ENCODE measurements at regions of chr3 and their contacts with region 1.

Region 1: DNA sequence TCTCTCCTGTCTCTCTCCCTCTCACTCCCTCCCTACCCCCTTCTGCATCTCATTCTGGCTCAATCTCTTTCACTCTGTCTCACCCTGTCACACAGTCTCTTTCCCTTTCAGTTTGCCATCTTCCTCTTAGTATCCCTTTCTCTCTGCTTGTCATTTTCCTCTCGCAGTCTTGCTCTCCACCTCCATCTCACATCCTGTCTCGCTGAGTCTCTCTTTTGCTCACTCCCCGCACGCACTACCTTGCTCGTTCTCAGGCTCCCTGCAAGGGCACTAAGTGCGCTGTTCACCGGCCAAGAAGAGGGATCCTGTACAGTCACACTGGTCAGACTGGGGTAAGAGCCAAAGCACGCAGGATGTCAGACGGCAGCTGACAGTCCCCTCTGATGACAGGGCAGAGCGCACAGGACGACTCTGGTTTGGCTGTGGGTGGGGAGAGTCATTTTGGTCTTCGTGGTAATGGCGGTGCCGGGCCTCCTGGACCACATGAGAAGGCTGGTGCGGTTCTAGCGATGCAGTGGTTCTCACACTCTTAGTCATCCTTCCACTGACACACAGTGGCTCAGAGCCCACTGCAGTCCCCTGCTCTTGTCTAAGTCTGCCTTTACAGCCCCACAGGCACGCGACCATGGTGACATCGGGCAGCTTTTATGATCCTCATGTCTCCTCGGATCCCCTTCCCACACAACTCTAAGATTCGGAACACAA is 356.8 kb downstream of the FOXP1 start:
- DNase-seq: peak; percentile 94
- H3K4me3 Mint-ChIP-seq: peak overlapping the region; percentile 85
- H3K27ac Mint-ChIP-seq: peak overlapping the region; percentile 95
- H3K4me1 Mint-ChIP-seq: peaks cover 41% of the 10 kb centered on the region
- H3K27me3 Mint-ChIP-seq: peaks cover 35% of the 10 kb centered on the region

Region 2: DNA sequence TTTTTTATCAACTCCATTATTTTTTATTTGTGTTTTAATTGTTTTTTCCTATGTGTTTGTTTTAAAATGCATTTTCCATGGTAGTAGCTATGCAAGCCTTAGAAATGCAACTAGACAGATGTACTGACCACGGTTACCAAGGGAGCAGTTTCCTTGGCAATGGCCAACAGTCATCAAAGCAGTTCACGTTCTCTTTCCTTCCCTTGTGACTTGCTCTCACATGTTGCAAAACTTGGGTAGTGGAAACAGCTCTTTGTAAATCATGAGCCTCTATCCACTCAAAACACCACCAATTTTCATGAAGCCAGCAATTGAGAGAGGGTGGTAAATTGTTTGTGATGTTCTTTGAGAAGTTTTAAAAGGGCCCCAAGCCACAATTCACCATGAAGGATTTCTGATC is 414.8 kb before region 1 on chr3:
- intact Hi-C with region 1: no loop called
- DNase-seq: no peak
- H3K4me3 Mint-ChIP-seq: no peak overlapping the region
- H3K27ac Mint-ChIP-seq: no peak overlapping the region
- H3K4me1 Mint-ChIP-seq: no peaks in the 10 kb centered on the region
- H3K27me3 Mint-ChIP-seq: peaks cover 6% of the 10 kb centered on the region

Region 3: DNA sequence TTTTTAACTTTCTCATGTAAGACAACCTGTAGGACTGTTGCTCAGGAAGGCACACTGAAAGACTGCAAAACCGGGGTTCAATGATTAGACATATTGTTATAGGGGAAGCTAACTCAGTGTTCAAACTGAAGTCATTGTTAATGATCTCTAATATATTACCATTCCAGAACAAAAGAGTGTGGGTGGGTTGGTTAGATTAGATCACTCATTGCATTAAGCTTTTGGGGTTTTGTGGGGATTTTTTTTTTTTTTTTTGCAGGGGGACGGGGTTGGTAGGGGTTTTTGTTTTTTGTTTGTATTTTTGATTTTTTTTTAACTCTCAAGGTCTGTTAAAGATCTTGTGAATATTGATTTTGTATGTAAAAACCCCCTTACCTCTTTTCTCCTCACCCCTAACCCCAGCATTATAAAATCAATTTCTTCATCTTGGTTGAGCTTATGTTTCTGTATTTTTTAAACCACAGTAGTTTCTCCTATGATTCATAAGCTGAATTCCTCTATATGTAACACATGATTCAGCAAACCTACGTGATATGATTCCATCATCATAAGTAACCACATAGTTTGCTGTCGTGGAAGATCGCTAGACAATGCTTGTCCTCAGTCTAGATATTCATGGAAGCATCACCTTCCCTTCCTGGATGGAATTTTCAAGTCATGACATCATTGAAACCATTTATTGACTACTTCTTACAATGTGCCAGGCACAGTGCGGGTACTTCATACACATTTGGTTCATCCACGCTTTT is 370.1 kb before region 1 on chr3:
- intact Hi-C with region 1: loop called (anchors 5 kb)
- DNase-seq: no peak
- H3K4me3 Mint-ChIP-seq: no peak overlapping the region
- H3K27ac Mint-ChIP-seq: peak overlapping the region; percentile 54
- H3K4me1 Mint-ChIP-seq: peaks cover 12% of the 10 kb centered on the region
- H3K27me3 Mint-ChIP-seq: peaks cover 19% of the 10 kb centered on the region

Region 4: DNA sequence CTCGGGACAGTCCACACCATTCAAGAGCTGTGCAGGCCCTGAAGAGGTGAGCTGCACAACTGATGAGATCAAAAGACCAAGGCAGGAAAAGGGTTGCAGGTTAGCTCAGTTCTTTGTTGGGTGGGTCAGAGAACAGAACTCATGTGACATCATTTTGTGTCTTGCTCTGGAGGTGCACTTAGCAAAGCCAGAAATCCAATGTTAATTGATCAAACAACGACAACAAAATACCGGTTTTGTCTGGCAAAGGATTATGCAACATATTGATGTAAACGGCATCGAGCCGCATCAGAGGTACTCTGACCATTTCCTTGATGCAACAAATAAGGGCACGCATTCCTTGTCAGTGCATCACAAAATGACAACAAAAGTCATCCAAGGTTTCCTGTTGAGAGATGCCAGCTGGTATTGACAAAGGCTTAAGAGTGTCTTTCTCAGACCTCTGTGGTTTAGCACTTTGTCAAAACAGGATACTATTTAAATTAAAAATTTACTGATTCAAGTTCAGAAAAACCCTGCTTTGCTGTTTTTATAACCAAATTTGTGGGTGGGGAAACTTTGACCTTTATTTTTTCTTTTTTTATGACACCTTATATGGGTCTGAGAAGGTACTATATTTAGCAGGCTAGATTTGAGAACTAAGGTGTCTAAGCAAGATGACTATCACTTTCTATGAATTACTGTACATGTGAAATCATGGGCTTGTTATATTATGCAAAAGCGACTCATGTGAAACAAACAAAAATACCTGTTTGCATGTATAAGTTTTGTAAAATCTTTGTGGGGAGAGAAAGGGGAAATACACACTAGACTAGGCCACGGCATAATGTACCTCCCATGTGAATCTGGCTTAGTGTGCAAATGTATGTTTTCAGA is 139.3 kb before region 1 on chr3:
- intact Hi-C with region 1: loop called (anchors 1 kb)
- DNase-seq: peak; percentile 83
- H3K4me3 Mint-ChIP-seq: peak overlapping the region; percentile 62
- H3K27ac Mint-ChIP-seq: peak overlapping the region; percentile 91
- H3K4me1 Mint-ChIP-seq: peaks cover 70% of the 10 kb centered on the region
- H3K27me3 Mint-ChIP-seq: no peaks in the 10 kb centered on the region

Region 5: GRCh38 chr3:71210257-71211007 is 16.3 kb before region 1 on chr3:
- intact Hi-C with region 1: no loop called
- DNase-seq: no peak
- H3K4me3 Mint-ChIP-seq: no peak overlapping the region
- H3K27ac Mint-ChIP-seq: no peak overlapping the region
- H3K4me1 Mint-ChIP-seq: peaks cover 7% of the 10 kb centered on the region
- H3K27me3 Mint-ChIP-seq: peaks cover under 1% of the 10 kb centered on the region

Region 6: GRCh38 chr3:71360764-71361163 is 134.0 kb after region 1 on chr3:
- intact Hi-C with region 1: loop called (anchors 1 kb)
- DNase-seq: no peak
- H3K4me3 Mint-ChIP-seq: peak overlapping the region; percentile 23
- H3K27ac Mint-ChIP-seq: peak overlapping the region; percentile 89
- H3K4me1 Mint-ChIP-seq: peaks cover 25% of the 10 kb centered on the region
- H3K27me3 Mint-ChIP-seq: peaks cover 19% of the 10 kb centered on the region

Region 7: DNA sequence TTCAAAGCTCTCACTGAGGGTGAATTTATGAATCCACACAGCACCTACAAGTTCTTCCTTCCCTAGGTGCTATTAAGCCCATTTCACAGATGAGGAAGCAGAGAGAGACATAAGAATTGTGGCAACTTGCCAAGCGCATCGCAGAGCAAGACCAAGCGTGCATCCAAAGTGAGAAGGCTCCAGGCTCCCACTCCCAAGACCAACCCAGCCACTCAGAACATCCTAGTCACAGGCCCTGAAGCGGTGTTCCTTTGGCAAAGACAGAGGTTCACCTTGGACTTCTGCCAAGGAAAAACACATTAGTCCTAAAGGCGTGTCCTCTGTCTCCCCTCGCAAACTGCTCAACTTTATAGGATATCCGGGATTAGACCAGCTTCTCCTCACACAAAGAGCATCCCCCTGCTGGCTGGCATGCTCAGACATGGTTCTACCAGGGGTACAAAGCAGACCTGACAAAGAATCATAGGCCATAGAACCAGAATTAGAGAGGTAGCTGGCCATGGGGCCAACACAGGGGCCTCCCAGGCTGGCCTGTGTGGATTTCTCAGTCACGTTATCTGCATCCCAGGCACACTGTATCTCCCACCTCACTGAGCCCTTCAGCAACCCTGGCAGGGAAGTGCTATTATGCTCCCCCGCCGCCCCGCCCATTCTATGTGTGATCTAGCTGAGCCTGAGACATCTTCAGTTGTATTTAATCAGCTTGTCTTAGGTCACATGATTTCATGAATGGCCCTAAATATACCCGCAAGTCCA is 196.6 kb after region 1 on chr3:
- intact Hi-C with region 1: loop called (anchors 1 kb)
- DNase-seq: no peak
- H3K4me3 Mint-ChIP-seq: no peak overlapping the region
- H3K27ac Mint-ChIP-seq: no peak overlapping the region
- H3K4me1 Mint-ChIP-seq: peaks cover 38% of the 10 kb centered on the region
- H3K27me3 Mint-ChIP-seq: peaks cover 34% of the 10 kb centered on the region

Region 8: DNA sequence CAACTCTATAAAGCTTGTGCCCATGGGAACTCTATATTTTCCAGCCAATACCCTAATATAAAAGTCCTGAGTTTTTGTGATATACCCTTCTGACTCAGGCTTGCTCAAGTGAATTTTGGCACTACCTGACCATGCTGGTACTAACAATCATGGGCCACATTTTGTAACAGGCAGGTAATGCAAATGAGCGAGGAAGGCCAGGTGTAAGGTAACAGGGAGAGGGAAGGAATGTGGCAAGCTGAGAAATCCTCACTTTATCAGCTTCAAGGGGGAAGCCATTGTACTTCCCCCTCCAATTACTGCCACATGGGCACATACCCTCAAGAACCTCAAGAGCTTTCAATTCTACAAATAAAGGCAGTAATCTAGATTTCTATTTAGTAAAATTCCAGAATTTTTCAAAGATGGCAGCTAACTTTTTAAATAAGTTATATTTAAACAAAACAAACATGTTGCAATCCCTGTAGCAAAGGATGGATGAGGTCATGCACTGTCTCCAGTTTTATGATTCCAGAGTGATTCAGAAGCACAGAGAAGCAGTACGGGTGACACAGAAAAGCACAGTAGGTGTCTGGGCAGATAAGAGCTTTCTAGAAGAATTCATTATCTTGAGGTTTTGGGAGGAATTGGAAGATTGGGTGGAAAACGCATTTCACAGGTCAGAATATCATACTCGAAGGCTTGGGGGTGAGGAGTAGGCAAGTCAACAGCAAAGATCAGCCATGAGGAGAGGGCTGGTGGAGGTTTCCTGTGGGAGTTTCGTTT is 269.2 kb after region 1 on chr3:
- intact Hi-C with region 1: loop called (anchors 5 kb)
- DNase-seq: peak; percentile 77
- H3K4me3 Mint-ChIP-seq: peak overlapping the region; percentile 71
- H3K27ac Mint-ChIP-seq: peak overlapping the region; percentile 81
- H3K4me1 Mint-ChIP-seq: peaks cover 50% of the 10 kb centered on the region
- H3K27me3 Mint-ChIP-seq: peaks cover 4% of the 10 kb centered on the region

Measured in activated CD4-positive, alpha-beta T cell treated with anti-CD3 and anti-CD28 coated beads, Interleukin-2, amount 10 ng/mL, durations not matched to agents 24 days and 14 days (primary cell).